Posterior vena cava (tissue), 2 donors: ENCODE measurements at regions of chr18 and their contacts with region 1.

Region 1: DNA sequence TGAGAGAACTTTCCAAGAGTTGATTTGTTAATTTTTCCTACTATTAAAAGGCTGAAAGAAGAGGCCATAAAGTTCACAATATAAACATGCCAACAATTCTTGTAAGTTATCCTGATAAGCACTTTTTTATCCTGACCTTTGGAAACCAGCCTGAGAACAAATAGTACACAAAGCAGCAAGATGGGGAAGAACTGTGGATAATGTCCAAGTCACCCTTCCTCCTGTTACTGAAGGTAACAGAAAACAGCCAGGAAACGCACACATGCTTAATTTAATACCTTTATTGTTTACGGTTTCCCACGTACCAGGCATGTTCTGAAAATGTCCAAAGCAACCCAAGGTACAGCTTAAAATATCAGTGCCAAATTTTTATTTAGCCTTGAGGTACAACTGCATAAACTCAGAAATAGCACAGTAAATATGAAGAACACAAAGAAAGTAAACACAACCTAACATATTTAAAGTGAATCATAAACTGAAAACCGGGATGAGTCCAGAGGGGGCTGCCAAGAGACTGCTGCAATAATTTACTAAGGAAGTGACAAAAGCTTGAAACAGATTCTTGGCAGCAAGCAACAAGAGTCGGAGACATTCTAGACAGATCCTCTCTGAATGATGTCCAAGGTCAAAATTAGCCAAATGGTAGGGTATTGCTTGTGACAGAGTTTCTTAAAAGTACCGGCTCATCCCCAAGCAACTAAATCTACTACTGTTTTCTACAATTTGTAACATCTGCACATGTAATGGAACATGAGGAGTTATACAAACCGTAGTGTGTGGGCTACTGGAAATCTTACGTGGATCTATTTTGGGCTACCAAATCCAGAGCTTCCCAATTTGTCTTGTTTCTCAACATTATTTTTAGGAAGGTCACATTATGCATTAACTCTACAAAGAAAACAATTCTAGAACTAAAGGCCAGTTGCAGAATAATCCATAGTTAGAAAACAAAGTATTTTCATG is 93.2 kb downstream of the CABYR start:
- DNase-seq: no peak

Region 2: DNA sequence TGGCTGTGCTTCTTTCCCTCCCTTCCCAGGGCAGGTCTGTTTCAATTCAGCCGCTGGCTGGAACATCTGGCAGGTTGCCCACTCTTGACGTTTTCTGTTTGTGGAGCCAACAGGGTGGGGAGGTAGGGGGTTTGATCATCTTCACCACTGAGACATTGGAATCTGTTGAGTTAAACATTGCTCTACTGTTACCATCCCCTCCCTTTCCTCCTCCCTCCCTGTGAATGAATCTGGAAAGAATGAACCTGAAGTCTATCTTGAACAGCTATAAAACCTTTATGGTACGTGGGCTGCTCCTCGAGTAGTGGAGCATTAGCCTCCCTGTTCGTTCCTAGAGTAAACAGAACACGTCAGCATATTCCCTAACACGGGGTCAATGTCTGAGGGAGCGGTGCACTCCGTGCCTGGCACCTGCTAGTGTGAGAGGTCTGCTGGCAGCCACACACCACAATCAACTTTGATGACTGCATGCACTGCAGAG is 1548.8 kb before region 1 on chr18:
- intact Hi-C with region 1: loop called in 1 of 2 experiments (anchors 5 kb)
- DNase-seq: no peak

Region 3: DNA sequence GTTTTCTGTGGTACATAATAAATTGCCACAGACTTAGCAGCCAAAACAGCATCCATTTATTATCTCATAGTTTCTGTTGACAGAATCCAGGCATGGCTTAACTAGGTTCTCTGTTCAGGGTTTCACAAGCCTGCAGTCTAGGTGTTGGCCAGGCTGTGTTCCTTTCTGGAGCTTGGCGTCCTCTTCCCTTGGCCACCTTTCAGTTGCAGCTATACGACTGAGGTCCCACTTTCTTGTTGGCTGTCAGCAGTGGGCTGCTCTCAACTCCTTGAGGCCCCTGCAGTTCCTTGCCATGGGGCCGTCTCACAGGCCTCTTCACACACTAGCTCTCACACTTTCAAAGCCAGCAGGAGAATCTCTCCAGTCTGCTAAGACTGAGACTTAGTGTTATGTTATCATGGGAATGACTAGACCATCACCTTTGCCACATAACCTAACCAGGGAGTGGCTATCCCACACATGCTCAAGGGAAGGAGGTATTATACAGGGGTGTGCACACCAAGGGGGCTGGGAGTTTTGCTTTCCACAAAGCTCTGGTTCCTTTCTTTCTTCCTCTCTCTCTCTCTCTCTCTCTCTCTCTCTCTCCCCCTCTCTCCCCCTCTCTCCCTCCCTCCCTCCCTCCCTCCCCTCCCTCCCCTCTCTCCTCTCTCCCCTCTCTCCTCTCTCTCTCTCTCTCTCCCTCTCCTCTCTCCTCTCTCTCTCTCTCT is 763.1 kb before region 1 on chr18:
- intact Hi-C with region 1: no loop called
- DNase-seq: no peak

Region 4: DNA sequence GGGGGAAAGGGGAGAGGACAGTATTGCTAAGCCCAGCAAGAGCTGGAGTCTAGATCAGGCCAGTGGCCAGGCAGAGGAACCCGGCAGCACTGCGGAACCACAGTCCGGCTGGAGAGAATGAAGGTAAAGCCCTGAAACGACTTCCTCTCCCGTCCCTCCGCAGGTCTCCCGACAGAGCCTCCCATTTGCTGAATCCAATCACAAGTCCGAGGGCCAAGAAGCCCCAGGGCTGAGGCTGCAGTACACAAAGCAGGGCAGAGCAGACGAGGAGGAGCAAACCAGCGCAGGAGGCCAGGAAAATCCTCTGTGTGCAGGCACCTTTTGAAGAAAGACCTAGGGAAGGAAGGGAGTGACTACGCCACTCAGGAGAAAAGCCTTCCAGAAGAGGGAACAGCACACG is 61.2 kb after region 1 on chr18:
- intact Hi-C with region 1: loop called in 1 of 2 experiments (anchors 2 kb)
- DNase-seq: no peak

Region 5: DNA sequence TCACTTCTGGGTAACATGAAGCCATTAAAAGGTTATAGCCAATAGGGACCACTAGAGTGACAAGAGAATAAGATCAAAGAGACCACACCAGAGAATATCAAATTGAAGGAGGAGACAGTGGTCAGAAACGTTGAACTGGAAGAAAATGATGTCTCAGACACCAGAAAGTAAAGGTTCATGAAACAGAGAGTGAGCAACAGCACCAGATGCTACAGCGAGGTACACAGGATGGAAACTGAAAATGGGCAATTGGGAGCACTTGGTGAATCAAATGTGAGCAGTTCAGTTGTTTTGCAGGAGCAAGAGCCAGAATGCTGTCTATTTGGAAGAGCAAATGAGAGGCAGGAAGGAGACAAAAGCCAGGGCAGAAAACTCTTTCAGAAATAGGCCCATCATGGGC is 1695.8 kb after region 1 on chr18:
- intact Hi-C with region 1: no loop called
- DNase-seq: no peak